ENCODE measurements at regions of chr3 and their contacts with region 1.

Region 1: GRCh38 chr3:114454551-114455251 is 160.9 kb downstream of the TIGIT start:
- DNase-seq: peak; percentile 40
- H3K4me3 ChIP-seq: peak overlapping the region; percentile 70
- H3K27ac ChIP-seq: peak overlapping the region; percentile 40
- H3K4me1 ChIP-seq: peaks cover 77% of the 10 kb centered on the region
- CTCF ChIP-seq: peak; percentile 30; the same call in 1 of the 2 replicates

Region 2: DNA sequence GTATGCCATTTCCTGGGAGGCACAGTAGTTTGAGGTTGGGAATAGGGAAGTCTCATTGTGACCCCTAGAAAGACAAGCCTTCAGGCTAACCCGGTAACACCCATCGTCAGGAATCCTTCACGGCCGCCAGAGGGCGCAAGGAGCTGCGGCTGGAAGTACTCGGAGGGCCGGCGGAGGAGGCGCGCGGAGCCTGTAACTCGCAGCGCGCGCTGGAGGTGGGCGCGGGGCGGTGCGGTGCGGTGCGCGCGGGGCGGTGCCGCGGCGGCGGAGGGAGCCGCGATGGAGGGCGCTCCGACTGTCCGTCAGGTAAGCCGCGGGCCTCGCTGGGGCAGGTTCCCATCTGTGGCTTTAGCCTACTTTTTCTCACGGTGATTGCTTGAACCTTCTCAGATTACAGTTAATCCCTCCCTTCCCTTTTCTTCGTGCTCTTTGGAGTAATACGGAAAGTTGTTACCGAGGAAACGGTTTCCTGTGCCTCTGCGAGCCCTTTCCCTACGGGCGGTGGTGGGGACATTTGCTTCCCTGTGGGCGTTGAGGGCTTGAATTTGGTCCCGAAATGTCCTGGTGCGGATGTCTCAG is 616.0 kb before region 1 on chr3 and contains the start of gene GRAMD1C:
- CTCF ChIA-PET with region 1: no interaction called
- POLR2A ChIA-PET with region 1: no interaction called
- intact Hi-C with region 1: loop called (anchors 10 kb)
- DNase-seq: peak; percentile 91
- H3K4me3 ChIP-seq: peak within 1 kb of the TSS; percentile 70
- H3K27ac ChIP-seq: no peak within 1 kb of the TSS
- H3K4me1 ChIP-seq: no peaks in the 10 kb centered on the region
- CTCF ChIP-seq: peak; percentile 89
- total RNA-seq, gene GRAMD1C: 4.1 and 6.1 TPM in 2 replicates

Region 3: DNA sequence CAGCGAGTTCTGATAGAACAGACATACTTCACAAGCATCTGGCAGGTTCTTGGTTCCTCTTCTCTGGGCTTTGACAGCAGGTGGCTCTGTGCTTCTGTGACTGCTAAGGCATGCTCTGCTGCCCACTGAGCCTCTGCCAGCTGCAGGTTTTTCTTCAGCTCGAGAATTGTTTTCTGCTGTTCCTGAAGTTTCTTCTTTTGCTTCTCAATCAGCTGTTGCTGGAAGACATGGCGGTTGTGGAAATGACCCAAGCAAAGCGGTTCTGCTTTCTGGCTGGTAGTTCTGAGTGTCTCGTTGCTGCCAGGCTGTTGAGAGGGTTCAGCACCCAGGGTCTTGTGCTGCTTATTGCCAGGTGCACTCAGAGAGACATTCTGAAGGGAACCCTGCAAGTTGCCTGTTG is 449.2 kb before region 1 on chr3:
- CTCF ChIA-PET with region 1: no interaction called
- POLR2A ChIA-PET with region 1: no interaction called
- intact Hi-C with region 1: loop called (anchors 5 kb)
- DNase-seq: peak; percentile 97
- H3K4me3 ChIP-seq: peak overlapping the region; percentile 59
- H3K27ac ChIP-seq: peak overlapping the region; percentile 97
- H3K4me1 ChIP-seq: peaks cover 74% of the 10 kb centered on the region
- CTCF ChIP-seq: peak; percentile 67

Region 4: GRCh38 chr3:114336122-114336697 is 118.5 kb before region 1 on chr3:
- CTCF ChIA-PET with region 1: no interaction called
- POLR2A ChIA-PET with region 1: no interaction called
- intact Hi-C with region 1: loop called (anchors 5 kb)
- DNase-seq: peak; percentile 9
- H3K4me3 ChIP-seq: no peak overlapping the region
- H3K27ac ChIP-seq: no peak overlapping the region
- H3K4me1 ChIP-seq: peaks cover 10% of the 10 kb centered on the region
- CTCF ChIP-seq: peak; percentile 81

Region 5: DNA sequence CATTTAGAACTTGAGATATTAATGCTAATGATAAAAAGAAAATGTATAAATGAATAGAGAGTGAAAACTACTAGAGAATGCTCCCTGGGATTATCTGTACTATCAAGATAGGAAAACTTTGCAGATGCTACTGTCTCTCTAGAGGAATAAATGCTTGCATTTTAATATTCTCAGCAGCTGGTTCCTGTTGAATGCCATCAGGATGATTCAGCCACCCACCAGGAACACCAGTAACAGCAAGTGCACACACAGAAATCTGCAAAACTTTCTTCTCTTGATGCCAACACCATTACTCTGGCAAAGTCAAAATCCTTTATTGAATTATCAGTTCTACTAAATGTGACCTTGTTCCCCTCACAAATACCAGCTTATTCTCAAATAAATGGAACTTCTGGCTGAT is 12.5 kb before region 1 on chr3:
- CTCF ChIA-PET with region 1: no interaction called
- POLR2A ChIA-PET with region 1: interaction called, 108 read pairs
- intact Hi-C with region 1: no loop called
- DNase-seq: no peak
- H3K4me3 ChIP-seq: no peak overlapping the region
- H3K27ac ChIP-seq: no peak overlapping the region
- H3K4me1 ChIP-seq: no peaks in the 10 kb centered on the region
- CTCF ChIP-seq: no peak